ENCODE measurements at regions of chr12 and their contacts with region 1.

Region 1: DNA sequence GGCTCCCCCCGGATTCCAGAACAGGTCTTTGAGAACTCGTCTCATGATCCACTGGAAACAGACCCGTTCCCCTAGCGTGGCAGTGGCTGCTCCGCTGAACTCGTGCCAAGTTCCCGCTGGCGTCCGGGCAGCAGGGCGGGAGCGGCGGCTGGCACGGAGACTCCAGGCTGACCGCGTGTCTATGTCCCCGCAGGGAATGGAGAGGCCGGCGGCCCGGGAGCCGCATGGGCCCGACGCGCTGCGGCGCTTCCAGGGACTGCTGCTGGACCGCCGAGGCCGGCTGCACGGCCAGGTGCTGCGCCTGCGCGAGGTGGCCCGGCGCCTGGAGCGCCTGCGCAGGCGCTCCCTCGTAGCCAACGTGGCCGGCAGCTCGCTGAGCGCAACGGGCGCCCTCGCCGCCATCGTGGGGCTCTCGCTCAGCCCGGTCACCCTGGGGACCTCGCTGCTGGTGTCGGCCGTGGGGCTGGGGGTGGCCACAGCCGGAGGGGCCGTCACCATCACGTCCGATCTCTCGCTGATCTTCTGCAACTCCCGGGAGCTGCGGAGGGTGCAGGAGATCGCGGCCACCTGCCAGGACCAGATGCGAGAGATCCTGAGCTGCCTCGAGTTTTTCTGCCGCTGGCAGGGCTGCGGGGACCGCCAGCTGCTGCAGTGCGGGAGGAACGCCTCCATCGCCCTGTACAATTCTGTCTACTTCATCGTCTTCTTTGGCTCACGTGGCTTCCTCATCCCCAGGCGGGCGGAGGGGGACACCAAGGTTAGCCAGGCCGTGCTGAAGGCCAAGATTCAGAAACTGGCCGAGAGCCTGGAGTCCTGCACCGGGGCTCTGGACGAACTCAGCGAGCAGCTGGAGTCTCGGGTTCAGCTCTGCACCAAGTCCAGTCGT is 1.5 kb downstream of the APOLD1 start:
- DNase-seq: peak; percentile 83 to 92 (median 89)
- ATAC-seq: peak; percentile 54 to 93 (median 73)
- H3K4me3 ChIP-seq: peak overlapping the region; percentile 8 to 85 (median 74)
- H3K27ac ChIP-seq: peak overlapping the region; percentile 72 to 99 (median 95)
- H3K4me1 ChIP-seq: peaks cover 0 to 58% (median 29%) of the 10 kb centered on the region in 12 donors
- H3K27me3 ChIP-seq: no peaks in the 10 kb centered on the region
- CTCF ChIP-seq: peak in 4 of 12 donors; percentile 6 to 21 (median 14)
- POLR2A ChIP-seq: peak in 1 of 2 donors; percentile 79

Region 2: GRCh38 chr12:12611512-12612306 is 175.2 kb before region 1 on chr12 and contains the start of gene CREBL2:
- intact Hi-C with region 1: no loop called
- DNase-seq: peak; percentile 93 to 97 (median 94)
- ATAC-seq: peak; percentile 97
- H3K4me3 ChIP-seq: peak within 1 kb of the TSS; percentile 70 to 90 (median 79)
- H3K27ac ChIP-seq: peak within 1 kb of the TSS; percentile 86 to 98 (median 94)
- H3K4me1 ChIP-seq: peaks cover 0 to 65% (median 22%) of the 10 kb centered on the region in 12 donors
- H3K27me3 ChIP-seq: no peaks in the 10 kb centered on the region
- CTCF ChIP-seq: peak in 2 of 12 donors; percentile 18 to 21
- POLR2A ChIP-seq: peak in 1 of 2 donors; percentile 44
- total RNA-seq, gene CREBL2: 15.5 to 30.0 (median 19.9) TPM

Region 3: GRCh38 chr12:12716793-12717585 is 70.0 kb before region 1 on chr12 and contains the start of gene CDKN1B:
- intact Hi-C with region 1: loop called in 7 of 10 experiments (anchors 5 to 10 kb)
- DNase-seq: peak; percentile 92 to 96 (median 94)
- ATAC-seq: peak; percentile 86 to 96 (median 94)
- H3K4me3 ChIP-seq: peak within 1 kb of the TSS; percentile 77 to 96 (median 92)
- H3K27ac ChIP-seq: peak within 1 kb of the TSS; percentile 96 to 100 (median 100)
- H3K4me1 ChIP-seq: peaks cover 0 to 62% (median 56%) of the 10 kb centered on the region in 12 donors
- H3K27me3 ChIP-seq: no peaks in the 10 kb centered on the region
- CTCF ChIP-seq: no peak
- POLR2A ChIP-seq: peak; percentile 65 to 80
- total RNA-seq, gene CDKN1B: 25.8 to 44.9 (median 35.1) TPM

Region 4: GRCh38 chr12:12724661-12725545 is 62.1 kb before region 1 on chr12:
- intact Hi-C with region 1: loop called in 6 of 10 experiments (anchors 2 to 10 kb)
- DNase-seq: peak; percentile 93 to 97 (median 94)
- ATAC-seq: peak; percentile 79 to 87 (median 84)
- H3K4me3 ChIP-seq: peak overlapping the region; percentile 43 to 84 (median 78)
- H3K27ac ChIP-seq: peak overlapping the region; percentile 90 to 100 (median 98)
- H3K4me1 ChIP-seq: peaks cover 0 to 54% (median 35%) of the 10 kb centered on the region in 12 donors
- H3K27me3 ChIP-seq: no peaks in the 10 kb centered on the region
- CTCF ChIP-seq: no peak
- POLR2A ChIP-seq: peak in 1 of 2 donors; percentile 89

Region 5: DNA sequence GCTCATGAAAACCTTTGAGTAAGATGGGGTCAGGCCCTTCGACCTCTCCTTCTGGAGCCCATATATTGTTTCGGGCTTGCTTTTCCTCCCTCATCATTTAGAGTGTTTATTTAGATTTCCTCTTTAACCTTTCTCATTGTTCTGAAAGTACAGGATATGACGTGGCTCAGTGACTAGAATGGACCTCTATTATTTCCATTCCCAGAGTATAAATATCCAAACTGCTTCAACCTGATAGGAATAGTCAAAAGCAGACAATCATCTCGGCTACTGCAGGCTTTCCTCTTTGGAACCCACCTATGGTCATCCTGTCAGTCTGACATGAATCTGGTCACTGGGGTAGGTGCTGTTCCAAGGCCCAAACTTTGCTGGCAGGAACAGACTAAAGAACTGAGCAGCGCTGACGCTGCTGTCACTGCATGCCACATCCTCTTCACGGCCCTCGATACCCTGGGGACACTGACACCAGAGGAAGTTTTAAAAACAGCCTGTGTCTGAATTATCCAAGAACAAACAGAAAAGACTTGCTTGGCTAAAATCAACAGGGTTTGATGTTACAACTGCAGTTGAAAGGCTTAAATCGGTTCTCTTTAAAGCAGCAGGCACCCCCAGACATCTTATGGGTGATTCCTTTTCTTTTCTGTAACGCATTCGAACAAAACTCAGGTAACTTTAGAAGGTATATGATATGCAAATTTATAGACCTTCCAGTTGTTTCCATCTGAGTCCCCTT is 21.2 kb after region 1 on chr12:
- intact Hi-C with region 1: loop called in 5 of 10 experiments (anchors 1 to 2 kb)
- DNase-seq: peak; percentile 73 to 82 (median 78)
- ATAC-seq: peak; percentile 58 to 87 (median 66)
- H3K4me3 ChIP-seq: peak overlapping the region in 9 of 12 donors; percentile 3 to 28 (median 12)
- H3K27ac ChIP-seq: peak overlapping the region; percentile 73 to 97 (median 85)
- H3K4me1 ChIP-seq: peaks cover 0 to 52% (median 27%) of the 10 kb centered on the region in 12 donors
- H3K27me3 ChIP-seq: no peaks in the 10 kb centered on the region
- CTCF ChIP-seq: no peak
- POLR2A ChIP-seq: peak in 1 of 2 donors; percentile 42

Region 6: GRCh38 chr12:12813120-12814101 is 26.5 kb after region 1 on chr12 and contains the start of gene DDX47:
- intact Hi-C with region 1: loop called in 4 of 10 experiments (anchors 1 to 2 kb)
- DNase-seq: peak; percentile 94 to 98 (median 96)
- ATAC-seq: peak; percentile 87 to 98 (median 94)
- H3K4me3 ChIP-seq: peak within 1 kb of the TSS; percentile 58 to 97 (median 84)
- H3K27ac ChIP-seq: peak within 1 kb of the TSS in 11 of 12 donors; percentile 33 to 86 (median 73)
- H3K4me1 ChIP-seq: peaks cover 0 to 68% (median 27%) of the 10 kb centered on the region in 12 donors
- H3K27me3 ChIP-seq: no peaks in the 10 kb centered on the region
- CTCF ChIP-seq: peak; percentile 90 to 99 (median 96)
- POLR2A ChIP-seq: peak in 1 of 2 donors; percentile 45
- total RNA-seq, gene DDX47: 23.9 to 38.2 (median 27.1) TPM

Region 7: GRCh38 chr12:12909228-12909994 is 122.5 kb after region 1 on chr12:
- intact Hi-C with region 1: no loop called
- DNase-seq: no peak
- ATAC-seq: peak in 1 of 4 donors; percentile 60
- H3K4me3 ChIP-seq: no peak overlapping the region
- H3K27ac ChIP-seq: peak overlapping the region in 6 of 12 donors; percentile 2 to 60 (median 24)
- H3K4me1 ChIP-seq: peaks cover 0 to 15% (median 7%) of the 10 kb centered on the region in 12 donors
- H3K27me3 ChIP-seq: peaks cover 0 to 6% (median 0%) of the 10 kb centered on the region in 9 donors
- CTCF ChIP-seq: no peak
- POLR2A ChIP-seq: no peak

Region 8: GRCh38 chr12:12983420-12984035 is 196.6 kb after region 1 on chr12:
- intact Hi-C with region 1: loop called in 1 of 10 experiments (anchors 5 kb)
- DNase-seq: peak in 1 of 5 donors; percentile 27
- ATAC-seq: peak in 3 of 4 donors; percentile 73 to 75 (median 74)
- H3K4me3 ChIP-seq: no peak overlapping the region
- H3K27ac ChIP-seq: no peak overlapping the region
- H3K4me1 ChIP-seq: peaks cover 0 to 15% (median 5%) of the 10 kb centered on the region in 12 donors
- H3K27me3 ChIP-seq: no peaks in the 10 kb centered on the region
- CTCF ChIP-seq: peak; percentile 38 to 76 (median 54)
- POLR2A ChIP-seq: no peak

Region 9: DNA sequence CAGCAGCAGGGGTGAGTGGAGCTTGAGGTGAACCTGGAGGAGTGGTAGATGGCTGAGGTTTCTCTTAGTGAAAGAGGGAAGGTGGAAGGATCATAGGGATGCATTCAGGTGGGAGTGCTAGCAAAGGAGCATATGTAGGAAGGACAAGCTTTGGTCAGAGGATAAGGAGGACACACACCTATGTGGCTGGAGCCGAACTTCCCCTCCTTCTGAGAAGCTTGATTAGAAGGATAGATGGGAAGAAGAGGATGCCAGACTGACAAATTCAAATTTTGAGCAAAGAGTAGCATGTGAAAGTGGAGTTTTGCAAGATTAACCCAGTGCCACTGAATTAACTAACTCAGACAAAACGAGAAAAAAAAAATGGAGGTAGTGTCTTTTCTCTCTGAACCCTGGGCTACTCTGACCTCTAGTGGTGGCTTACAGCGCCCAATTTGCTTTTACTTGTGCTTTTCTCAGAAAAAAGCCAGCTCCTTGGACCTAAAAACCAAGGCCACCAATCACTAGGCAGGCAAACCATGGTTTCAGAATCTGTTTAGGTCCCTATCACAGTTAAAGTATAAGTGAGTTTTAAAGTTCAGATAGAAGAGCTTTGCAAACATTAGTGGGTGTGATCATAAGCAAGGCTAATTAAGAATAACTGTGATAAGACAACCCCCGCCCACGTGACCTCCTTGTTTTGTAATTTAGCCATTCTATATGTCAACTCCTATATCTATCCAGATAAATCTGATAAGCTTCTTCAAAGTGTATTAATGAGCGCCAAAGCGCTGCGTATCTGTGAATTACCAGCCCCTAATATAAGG is 425.1 kb after region 1 on chr12:
- intact Hi-C with region 1: loop called in 2 of 10 experiments (anchors 5 kb)
- DNase-seq: peak in 3 of 5 donors; percentile 38 to 51 (median 43)
- ATAC-seq: peak in 2 of 4 donors; percentile 26 to 28
- H3K4me3 ChIP-seq: no peak overlapping the region
- H3K27ac ChIP-seq: peak overlapping the region in 1 of 12 donors; percentile 13
- H3K4me1 ChIP-seq: peaks cover 3 to 52% (median 45%) of the 10 kb centered on the region in 12 donors
- H3K27me3 ChIP-seq: no peaks in the 10 kb centered on the region
- CTCF ChIP-seq: peak; percentile 61 to 90 (median 76)
- POLR2A ChIP-seq: no peak